Sigmoid colon (tissue), 7 donors: ENCODE measurements at regions of chr14 and their contacts with region 1.

Region 1: GRCh38 chr14:76595266-76595665 is 166.0 kb upstream of the VASH1 start:
- DNase-seq: no peak
- H3K4me3 ChIP-seq: no peak overlapping the region
- H3K27ac ChIP-seq: no peak overlapping the region
- H3K4me1 ChIP-seq: peaks cover 0 to 55% (median 37%) of the 10 kb centered on the region in 4 donors
- H3K27me3 ChIP-seq: no peaks in the 10 kb centered on the region
- CTCF ChIP-seq: no peak
- EP300 ChIP-seq: no peak
- POLR2A ChIP-seq: no peak

Region 2: GRCh38 chr14:76639606-76640229 is 44.5 kb after region 1 on chr14:
- intact Hi-C with region 1: loop called (anchors 5 kb)
- DNase-seq: no peak
- H3K4me3 ChIP-seq: no peak overlapping the region
- H3K27ac ChIP-seq: no peak overlapping the region
- H3K4me1 ChIP-seq: peaks cover 0 to 14% (median 4%) of the 10 kb centered on the region in 4 donors
- H3K27me3 ChIP-seq: no peaks in the 10 kb centered on the region
- CTCF ChIP-seq: no peak
- EP300 ChIP-seq: no peak
- POLR2A ChIP-seq: no peak

Region 3: DNA sequence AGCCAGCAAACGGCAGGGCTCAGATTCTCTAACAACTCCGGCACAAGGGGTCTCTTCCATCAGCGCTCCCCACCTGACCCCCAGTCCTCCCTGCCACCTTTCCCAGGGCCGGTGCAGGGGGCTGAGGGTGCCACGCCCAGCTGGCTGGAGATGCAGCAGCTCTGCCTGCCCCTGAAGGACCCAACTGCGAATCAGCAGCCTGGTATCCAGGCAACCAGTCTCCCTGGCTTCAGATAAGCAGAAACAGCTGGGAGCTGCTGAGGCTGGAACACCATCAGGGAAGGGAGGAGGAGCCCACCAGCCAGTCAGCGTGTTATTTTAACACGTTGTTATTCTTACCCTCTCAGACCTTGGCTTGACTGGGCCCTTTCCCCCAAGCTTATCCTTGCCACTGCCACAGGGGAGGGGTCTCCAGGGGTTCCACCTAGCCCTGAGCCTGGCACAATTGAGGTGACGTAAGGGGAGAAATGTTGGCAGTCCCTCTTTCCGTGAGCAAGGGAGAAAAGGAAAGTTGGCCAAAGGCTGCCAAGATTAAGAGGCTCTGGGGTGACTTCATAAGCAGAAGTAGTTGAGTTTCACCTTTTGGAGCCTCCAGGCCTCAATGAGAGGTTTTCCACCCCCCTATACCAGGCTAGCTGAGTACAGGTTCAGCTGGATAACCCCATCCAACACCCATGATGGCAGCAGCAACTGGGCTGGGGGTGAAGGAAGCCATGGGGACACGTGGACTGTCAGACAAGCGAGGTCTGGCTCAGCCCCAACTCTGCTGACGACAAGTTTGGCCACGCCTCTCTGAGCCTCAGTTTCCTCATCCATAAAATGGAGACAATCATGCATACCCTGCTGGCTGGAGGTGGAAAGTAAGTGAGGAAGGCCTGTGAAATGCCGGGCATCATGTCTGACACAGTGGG is 342.2 kb after region 1 on chr14:
- intact Hi-C with region 1: no loop called
- DNase-seq: no peak
- H3K4me3 ChIP-seq: no peak overlapping the region
- H3K27ac ChIP-seq: peak overlapping the region in 3 of 4 donors; percentile 10 to 68 (median 47)
- H3K4me1 ChIP-seq: peaks cover 0 to 28% (median 22%) of the 10 kb centered on the region in 4 donors
- H3K27me3 ChIP-seq: no peaks in the 10 kb centered on the region
- CTCF ChIP-seq: no peak
- EP300 ChIP-seq: no peak
- POLR2A ChIP-seq: no peak

Region 4: DNA sequence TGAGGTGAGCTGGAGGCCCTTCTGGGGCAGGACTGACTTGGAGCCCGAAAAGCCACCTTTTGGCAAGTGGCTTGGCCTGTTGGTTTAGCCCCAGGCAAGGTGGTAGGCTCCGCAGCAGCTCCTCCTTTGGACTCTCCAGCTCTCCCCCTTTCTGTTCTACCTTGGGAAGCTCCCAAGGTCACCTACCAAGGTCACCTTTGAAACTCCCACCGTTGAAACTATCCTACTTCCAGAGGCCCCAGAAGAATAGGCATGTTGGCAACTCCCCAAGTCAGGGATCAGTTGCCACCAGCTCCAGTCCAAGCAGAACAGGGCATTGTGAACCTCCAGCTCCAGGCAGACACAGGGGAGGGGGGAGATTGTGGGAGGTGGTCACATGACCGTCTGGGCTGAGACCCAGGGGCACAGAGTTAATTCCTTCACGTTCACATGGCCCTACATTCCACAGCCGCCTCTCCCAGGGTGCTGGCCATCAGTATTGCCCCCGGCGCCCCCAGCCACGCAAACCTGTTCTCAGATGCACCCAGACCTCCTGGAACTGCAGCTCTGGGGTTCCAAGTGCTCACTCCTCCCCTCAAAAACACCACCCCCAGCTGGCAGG is 418.8 kb after region 1 on chr14:
- intact Hi-C with region 1: no loop called
- DNase-seq: peak; percentile 87
- H3K4me3 ChIP-seq: no peak overlapping the region
- H3K27ac ChIP-seq: peak overlapping the region in 3 of 4 donors; percentile 38 to 62 (median 60)
- H3K4me1 ChIP-seq: peaks cover 0 to 18% (median 15%) of the 10 kb centered on the region in 4 donors
- H3K27me3 ChIP-seq: no peaks in the 10 kb centered on the region
- CTCF ChIP-seq: no peak
- EP300 ChIP-seq: no peak
- POLR2A ChIP-seq: no peak

Region 5: DNA sequence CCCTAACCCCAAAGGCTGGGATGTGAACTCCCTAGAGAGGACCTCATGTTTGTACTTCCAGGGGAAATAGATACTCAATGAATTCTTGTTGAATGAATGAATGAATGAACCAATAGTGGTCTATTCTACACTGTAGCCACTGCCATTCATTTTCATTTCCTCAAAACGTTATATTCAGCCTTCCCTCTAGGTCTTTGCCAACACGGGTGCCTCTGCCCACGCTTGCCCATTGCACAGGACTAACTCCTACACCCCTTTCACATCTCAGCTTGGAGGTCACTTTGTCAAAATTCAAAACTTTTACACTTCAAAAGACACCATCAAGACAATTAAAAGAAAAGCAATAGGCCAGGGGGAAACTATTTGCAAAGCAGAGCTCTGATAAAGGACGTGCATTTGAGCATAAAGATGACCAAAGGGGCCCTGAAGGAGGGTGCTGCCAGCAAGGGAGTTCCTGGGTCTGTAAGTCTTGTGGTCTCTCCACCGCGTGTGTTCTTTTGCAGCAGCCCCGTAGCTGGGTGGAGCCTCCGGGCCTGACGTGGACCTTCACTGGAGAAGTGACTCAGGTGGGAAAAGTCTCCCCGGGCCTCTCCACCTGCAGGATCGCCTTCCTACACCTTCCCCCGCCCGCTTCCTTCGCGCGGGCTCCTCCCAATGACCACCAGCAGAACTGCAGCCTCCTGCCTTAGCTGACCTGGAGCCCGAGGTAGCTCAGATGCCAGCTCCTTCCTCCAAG is 617.8 kb after region 1 on chr14:
- intact Hi-C with region 1: no loop called
- DNase-seq: no peak
- H3K4me3 ChIP-seq: no peak overlapping the region
- H3K27ac ChIP-seq: no peak overlapping the region
- H3K4me1 ChIP-seq: no peaks in the 10 kb centered on the region
- H3K27me3 ChIP-seq: peaks cover 0 to 10% (median 0%) of the 10 kb centered on the region in 3 donors
- CTCF ChIP-seq: peak in 1 of 4 experiments; percentile 27
- EP300 ChIP-seq: no peak
- POLR2A ChIP-seq: no peak